ENCODE measurements at regions of chr6 and their contacts with region 1.

Region 1: DNA sequence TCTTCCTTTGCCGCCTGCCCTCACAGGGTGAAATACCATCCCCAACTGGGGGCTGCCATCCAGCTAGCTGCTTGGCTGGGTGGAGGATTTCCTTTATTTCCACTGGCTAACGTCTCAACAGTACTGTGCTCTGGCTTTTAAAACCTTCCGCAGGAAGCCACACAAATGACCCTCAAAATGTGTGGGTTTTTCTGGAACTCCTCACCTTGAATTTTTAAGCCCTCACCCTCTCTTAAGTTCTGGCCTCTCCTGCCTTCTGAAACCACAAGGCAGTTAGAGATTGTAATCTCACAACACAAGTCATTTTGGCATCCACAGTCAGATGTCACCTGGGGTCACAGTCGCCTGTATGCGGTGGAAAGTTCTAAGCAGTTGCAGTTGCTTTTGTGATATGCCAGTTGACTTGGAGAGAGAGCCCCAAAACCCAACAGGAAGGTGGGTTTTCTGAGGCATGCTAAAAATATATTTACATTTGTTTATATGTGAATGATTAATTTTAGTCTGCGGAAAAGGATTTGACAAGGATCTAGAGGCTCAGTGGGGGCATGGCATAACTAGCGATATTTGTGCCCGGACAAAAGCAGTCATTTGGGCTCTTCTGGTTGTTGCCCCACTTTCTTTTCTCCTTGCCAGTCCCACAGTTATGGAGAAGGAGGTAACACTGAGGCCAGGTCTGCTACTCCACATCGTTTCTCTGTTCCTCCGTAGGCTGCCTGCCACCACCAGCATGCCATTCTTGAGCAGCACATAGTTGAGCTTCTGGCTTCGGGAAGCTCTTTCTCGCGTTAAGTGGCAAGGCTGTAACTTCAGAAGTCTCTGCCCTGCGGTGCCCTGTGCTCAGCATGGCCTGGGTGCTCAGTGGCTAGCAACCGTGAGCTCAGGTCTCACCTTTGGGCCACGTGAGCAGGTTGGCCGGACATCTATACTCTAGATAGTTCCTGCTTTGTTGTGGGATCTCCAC is 335.3 kb downstream of the CD83 start:
- DNase-seq: peak; percentile 79
- H3K4me3 Mint-ChIP-seq: no peak overlapping the region
- H3K27ac Mint-ChIP-seq: no peak overlapping the region
- H3K4me1 Mint-ChIP-seq: peaks cover 53% of the 10 kb centered on the region
- H3K27me3 Mint-ChIP-seq: peaks cover 1% of the 10 kb centered on the region

Region 2: GRCh38 chr6:14276667-14277404 is 176.0 kb before region 1 on chr6:
- CTCF ChIA-PET with region 1: no interaction called
- intact Hi-C with region 1: loop called (anchors 5 kb)
- DNase-seq: peak; percentile 63
- H3K4me3 Mint-ChIP-seq: peak overlapping the region; percentile 40
- H3K27ac Mint-ChIP-seq: peak overlapping the region; percentile 85
- H3K4me1 Mint-ChIP-seq: peaks cover 37% of the 10 kb centered on the region
- H3K27me3 Mint-ChIP-seq: no peaks in the 10 kb centered on the region

Region 3: DNA sequence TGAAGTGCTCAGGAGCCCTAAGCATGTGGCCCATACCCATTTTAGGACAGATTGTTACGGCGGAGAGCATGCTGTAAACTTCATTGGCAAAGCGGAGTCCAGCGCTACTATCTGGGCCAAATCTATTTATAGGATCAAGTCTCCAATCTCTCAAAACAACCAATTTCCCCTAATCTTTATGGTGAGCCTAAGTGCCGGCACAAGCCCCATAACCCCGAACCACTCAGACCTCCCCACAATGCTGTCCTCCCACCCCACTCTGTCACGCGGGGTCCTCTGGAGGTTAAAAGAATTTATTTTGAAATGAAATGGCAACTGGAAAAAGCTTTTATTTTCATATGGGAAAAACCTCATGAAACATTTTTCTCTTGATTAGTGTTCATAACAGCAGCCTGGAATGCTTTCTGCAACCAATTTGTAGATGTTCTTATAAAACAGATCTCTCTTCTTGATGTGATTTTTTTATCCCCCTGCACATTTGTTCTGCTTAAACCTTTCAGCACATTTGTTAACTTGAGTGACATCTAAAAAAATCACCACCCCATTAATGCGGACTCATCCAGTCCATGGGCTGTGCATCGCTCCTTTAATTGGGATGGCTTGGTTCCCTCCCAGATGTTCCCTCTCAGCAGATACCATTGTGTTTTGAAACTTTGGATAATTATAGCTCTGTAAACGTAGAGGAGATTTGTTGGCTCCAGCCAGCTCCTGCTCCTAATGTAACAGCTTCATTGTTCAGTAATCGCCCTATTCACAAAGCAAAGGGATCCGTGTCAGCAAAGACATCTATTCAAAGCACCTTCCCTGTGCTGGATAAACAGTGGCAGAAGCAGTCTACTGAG is 11.7 kb before region 1 on chr6:
- CTCF ChIA-PET with region 1: no interaction called
- intact Hi-C with region 1: no loop called
- DNase-seq: no peak
- H3K4me3 Mint-ChIP-seq: no peak overlapping the region
- H3K27ac Mint-ChIP-seq: no peak overlapping the region
- H3K4me1 Mint-ChIP-seq: peaks cover 2% of the 10 kb centered on the region
- H3K27me3 Mint-ChIP-seq: no peaks in the 10 kb centered on the region

Region 4: GRCh38 chr6:14621518-14621917 is 168.7 kb after region 1 on chr6:
- CTCF ChIA-PET with region 1: no interaction called
- intact Hi-C with region 1: no loop called
- DNase-seq: no peak
- H3K4me3 Mint-ChIP-seq: no peak overlapping the region
- H3K27ac Mint-ChIP-seq: no peak overlapping the region
- H3K4me1 Mint-ChIP-seq: peaks cover 18% of the 10 kb centered on the region
- H3K27me3 Mint-ChIP-seq: no peaks in the 10 kb centered on the region